Right lobe of liver (tissue), 6 donors: ENCODE measurements at regions of chr19 and their contacts with region 1.

Region 1: DNA sequence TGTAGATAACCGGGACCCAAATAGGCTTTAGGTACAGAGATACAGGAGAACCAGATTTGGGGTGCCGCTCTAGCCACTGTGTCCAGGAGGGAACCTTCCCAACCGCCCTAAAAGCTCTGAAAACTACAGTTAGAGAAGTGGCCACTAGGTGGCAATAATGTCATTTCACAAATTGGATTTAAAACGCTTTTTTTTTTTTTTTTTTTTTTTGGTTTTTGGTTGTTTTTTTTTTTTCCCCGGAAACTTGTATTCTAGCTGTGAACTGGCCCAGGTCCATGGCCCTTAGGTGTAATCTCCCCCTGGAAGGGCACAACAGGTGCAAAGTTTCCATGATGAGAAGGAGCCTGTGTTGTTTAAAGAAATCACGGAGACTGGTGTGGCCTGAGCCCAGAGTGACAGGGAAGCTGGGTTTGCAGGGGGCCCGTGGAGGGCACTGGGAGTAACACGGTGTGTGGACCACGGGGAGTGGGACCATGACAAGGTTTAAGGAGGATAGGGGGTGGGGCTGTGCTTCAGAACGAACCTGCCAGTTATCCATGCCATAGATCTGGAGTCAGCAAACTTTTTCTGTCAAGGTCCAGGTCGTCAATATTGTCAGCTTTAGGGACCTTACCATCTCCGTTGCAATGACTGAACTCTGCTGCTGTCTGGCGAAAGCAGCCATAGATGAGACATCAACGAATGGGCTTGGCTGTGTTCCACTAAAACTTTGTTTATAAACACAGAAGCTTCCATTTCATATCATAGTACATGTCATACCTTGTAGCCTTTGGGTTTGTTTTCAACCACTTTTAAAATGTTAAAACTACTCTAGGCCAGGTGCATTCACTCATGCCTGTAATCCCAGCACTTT is 10.1 kb downstream of the OR1I1 start:
- DNase-seq: no peak
- ATAC-seq: peak; percentile 57 to 76 (median 66)
- H3K4me3 ChIP-seq: no peak overlapping the region
- H3K27ac ChIP-seq: no peak overlapping the region
- H3K4me1 ChIP-seq: peaks cover 0 to 4% (median 0%) of the 10 kb centered on the region in 4 donors
- H3K27me3 ChIP-seq: no peaks in the 10 kb centered on the region
- CTCF ChIP-seq: peak; percentile 39 to 66 (median 66)
- POLR2A ChIP-seq: no peak

Region 2: DNA sequence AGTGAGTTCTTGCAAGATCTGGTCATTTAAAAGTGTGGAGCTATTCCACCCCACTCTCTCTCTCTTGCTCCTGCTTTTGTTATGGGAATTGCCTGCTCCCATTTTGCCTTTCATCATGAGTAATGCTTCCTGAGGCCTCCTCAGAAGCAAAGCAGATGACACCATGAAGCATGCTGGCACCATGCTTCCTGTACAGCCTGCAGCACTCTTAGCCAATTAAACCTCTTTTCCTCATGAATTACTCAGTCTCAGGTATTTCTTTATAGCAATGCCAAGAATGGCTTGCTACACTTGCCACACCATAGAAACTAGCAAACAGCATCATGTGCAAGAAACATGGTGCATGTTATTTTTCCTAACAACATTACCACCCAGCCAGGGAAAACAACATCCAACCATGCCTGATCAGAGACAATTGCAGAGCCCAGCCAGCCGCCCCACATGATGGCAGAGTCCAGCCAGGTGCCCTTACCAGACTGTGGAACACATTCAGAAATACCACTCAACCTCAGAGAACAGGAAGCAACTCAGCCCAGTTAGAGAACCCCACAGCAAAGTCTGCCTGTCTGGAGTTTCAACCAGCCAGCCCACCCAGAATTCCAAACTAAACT is 52.0 kb after region 1 on chr19:
- intact Hi-C with region 1: loop called in 1 of 2 experiments (anchors 10 kb)
- DNase-seq: no peak
- ATAC-seq: no peak
- H3K4me3 ChIP-seq: no peak overlapping the region
- H3K27ac ChIP-seq: no peak overlapping the region
- H3K4me1 ChIP-seq: no peaks in the 10 kb centered on the region
- H3K27me3 ChIP-seq: no peaks in the 10 kb centered on the region
- CTCF ChIP-seq: no peak
- POLR2A ChIP-seq: no peak

Region 3: DNA sequence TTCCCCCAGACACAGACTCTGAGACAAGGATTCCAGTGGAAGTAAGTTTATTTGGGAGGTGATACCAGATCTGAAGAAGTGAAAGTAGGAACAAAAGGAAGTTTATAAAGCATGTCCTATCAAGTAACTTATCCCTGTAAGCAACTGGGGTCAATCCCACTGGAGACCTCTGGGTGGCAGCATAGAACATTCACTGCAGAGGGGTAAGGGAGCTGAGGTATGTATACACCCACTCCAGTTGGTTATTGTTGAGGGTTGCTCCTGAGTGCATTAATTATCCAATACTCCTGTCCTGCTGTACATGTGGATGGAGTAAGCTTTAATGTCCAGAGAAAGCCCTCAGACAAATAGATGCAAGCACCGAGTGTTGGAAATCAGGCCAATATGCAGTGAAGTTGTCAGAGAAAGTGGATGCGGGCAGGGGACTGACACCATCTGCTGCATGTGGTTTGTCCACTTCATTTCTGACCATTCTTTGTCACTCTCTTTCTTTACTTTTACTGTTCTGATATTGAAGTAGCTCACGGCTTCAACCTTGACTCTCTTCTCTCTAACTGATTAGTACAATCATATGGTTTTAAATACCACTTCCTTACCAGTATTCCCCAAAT is 62.0 kb after region 1 on chr19:
- intact Hi-C with region 1: loop called (anchors 10 kb)
- DNase-seq: no peak
- ATAC-seq: peak; percentile 50 to 60 (median 55)
- H3K4me3 ChIP-seq: no peak overlapping the region
- H3K27ac ChIP-seq: no peak overlapping the region
- H3K4me1 ChIP-seq: no peaks in the 10 kb centered on the region
- H3K27me3 ChIP-seq: no peaks in the 10 kb centered on the region
- CTCF ChIP-seq: peak; percentile 21 to 52 (median 44)
- POLR2A ChIP-seq: no peak

Region 4: DNA sequence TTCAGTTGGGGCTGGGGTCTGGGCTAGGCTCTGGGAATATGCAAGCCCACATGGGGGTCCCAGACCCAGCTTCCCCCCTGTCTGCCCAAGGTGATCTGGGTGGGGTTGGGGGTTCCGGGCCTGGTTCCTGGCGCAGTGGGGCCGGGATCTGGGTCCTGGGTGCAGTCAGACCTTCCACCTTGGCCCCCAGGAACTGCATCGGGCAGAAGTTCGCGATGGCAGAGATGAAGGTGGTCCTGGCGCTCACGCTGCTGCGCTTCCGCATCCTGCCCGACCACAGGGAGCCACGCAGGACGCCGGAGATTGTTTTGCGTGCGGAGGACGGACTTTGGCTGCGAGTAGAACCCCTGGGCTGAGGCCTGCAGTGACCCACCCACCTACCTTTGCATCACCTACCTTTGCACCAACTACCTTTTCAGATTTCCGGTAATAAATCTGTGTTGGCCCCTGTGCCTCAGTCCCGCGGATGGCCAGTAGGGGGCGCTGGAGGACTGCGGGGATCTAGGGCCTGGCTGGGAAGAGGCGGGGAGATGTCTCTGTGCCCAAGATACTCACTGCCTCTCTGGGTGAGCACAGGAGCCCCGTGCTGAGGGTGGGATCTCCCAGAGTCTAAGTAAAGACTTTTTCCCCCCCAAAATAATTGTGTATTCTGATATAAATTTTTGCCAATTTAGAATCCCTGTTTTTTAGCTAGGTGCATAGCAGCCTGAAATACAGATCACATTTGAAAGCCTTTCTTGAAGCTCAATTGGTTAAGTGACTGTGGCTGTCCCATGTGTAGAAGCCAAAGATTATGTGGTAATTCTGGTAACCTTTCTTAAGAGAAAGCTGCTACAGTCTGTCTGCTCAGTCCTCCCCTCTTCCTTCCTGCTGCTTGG is 537.1 kb after region 1 on chr19:
- intact Hi-C with region 1: no loop called
- DNase-seq: peak; percentile 86 to 87 (median 86)
- ATAC-seq: peak; percentile 91 to 95 (median 92)
- H3K4me3 ChIP-seq: no peak overlapping the region
- H3K27ac ChIP-seq: no peak overlapping the region
- H3K4me1 ChIP-seq: peaks cover 0 to 19% (median 3%) of the 10 kb centered on the region in 4 donors
- H3K27me3 ChIP-seq: no peaks in the 10 kb centered on the region
- CTCF ChIP-seq: peak; percentile 91 to 98 (median 96)
- POLR2A ChIP-seq: no peak